ENCODE measurements at regions of chr4 and their contacts with region 1.

Region 1: GRCh38 chr4:83639849-83640493 is 104.1 kb downstream of the GPAT3 start:
- DNase-seq: peak in 1 of 2 donors; percentile 84
- ATAC-seq: peak; percentile 67 to 78 (median 68)
- H3K4me3 ChIP-seq: no peak overlapping the region
- H3K4me3 Mint-ChIP-seq: no peak overlapping the region
- H3K27ac ChIP-seq: no peak overlapping the region
- H3K27ac Mint-ChIP-seq: no peak overlapping the region
- H3K4me1 ChIP-seq: no peaks in the 10 kb centered on the region
- H3K4me1 Mint-ChIP-seq: peaks cover 4 to 5% of the 10 kb centered on the region in 2 donors
- H3K27me3 ChIP-seq: no peaks in the 10 kb centered on the region
- H3K27me3 Mint-ChIP-seq: peaks cover 8 to 11% of the 10 kb centered on the region in 2 donors
- CTCF ChIP-seq: peak; percentile 94

Region 2: DNA sequence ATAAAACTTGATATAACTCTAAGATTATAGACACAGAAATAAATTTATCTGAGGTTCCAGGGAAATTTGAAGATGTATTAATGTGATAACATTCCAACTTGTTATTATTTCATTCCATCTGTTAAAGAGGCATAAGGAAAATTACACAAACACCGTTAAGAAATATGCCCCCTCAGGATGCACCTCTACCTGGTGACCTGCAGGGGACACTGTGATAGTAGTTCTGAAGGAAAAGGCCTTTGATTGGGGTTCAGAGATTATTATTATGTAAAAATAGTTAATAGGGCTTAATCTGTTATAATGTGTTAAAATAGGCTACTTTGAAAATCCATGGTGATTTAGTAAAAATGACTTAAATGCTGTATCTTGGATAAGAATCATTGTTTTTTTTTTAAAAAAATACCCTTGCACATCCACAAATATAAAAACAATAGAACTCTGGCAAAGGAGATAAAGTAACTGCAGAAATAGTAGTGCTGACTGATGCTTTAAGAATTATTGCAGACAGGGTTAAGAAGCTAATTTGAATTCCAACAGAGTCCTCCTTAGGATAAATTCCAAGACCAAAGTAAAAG is 149.0 kb before region 1 on chr4:
- intact Hi-C with region 1: loop called (anchors 1 kb)
- DNase-seq: peak in 1 of 2 donors; percentile 72
- ATAC-seq: peak; percentile 67 to 90 (median 80)
- H3K4me3 ChIP-seq: no peak overlapping the region
- H3K4me3 Mint-ChIP-seq: no peak overlapping the region
- H3K27ac ChIP-seq: no peak overlapping the region
- H3K27ac Mint-ChIP-seq: no peak overlapping the region
- H3K4me1 ChIP-seq: no peaks in the 10 kb centered on the region
- H3K4me1 Mint-ChIP-seq: no peaks in the 10 kb centered on the region
- H3K27me3 ChIP-seq: no peaks in the 10 kb centered on the region
- H3K27me3 Mint-ChIP-seq: no peaks in the 10 kb centered on the region
- CTCF ChIP-seq: peak; percentile 91

Region 3: DNA sequence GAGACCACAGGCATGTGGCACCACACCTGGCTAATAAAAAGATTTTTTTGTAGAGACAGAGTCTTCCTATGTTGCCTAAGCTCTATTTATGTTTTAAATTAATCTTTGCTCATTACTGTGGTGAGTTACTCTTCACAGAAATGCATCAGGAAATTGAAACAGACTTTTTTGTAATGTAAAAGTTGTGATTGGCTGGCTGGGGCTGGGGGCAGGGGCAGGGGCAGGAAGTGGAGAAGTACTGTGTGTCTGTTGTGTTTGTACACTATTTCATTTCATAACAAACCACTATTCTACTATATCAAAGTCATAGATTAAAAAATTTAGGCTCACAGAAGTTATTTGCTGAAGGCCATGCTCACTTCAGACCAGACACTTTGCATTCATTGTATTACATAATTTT is 136.0 kb before region 1 on chr4:
- intact Hi-C with region 1: loop called (anchors 1 kb)
- DNase-seq: peak in 1 of 2 donors; percentile 31
- ATAC-seq: no peak
- H3K4me3 ChIP-seq: no peak overlapping the region
- H3K4me3 Mint-ChIP-seq: no peak overlapping the region
- H3K27ac ChIP-seq: no peak overlapping the region
- H3K27ac Mint-ChIP-seq: peak overlapping the region; percentile 15 to 42
- H3K4me1 ChIP-seq: no peaks in the 10 kb centered on the region
- H3K4me1 Mint-ChIP-seq: peaks cover 6 to 9% of the 10 kb centered on the region in 2 donors
- H3K27me3 ChIP-seq: no peaks in the 10 kb centered on the region
- H3K27me3 Mint-ChIP-seq: no peaks in the 10 kb centered on the region
- CTCF ChIP-seq: no peak

Region 4: GRCh38 chr4:83658806-83659495 is 19.0 kb after region 1 on chr4:
- intact Hi-C with region 1: no loop called
- DNase-seq: no peak
- ATAC-seq: no peak
- H3K4me3 ChIP-seq: no peak overlapping the region
- H3K4me3 Mint-ChIP-seq: no peak overlapping the region
- H3K27ac ChIP-seq: no peak overlapping the region
- H3K27ac Mint-ChIP-seq: no peak overlapping the region
- H3K4me1 ChIP-seq: no peaks in the 10 kb centered on the region
- H3K4me1 Mint-ChIP-seq: no peaks in the 10 kb centered on the region
- H3K27me3 ChIP-seq: no peaks in the 10 kb centered on the region
- H3K27me3 Mint-ChIP-seq: no peaks in the 10 kb centered on the region
- CTCF ChIP-seq: no peak

Measured in natural killer cell (primary cell).